BJ (cell line): ENCODE measurements at regions of chr1 and their contacts with region 1.

Region 1: GRCh38 chr1:171809834-171810233 is 28.4 kb downstream of the METTL13 start:
- DNase-seq: no peak
- H3K4me3 ChIP-seq: no peak overlapping the region
- H3K27me3 ChIP-seq: no peaks in the 10 kb centered on the region; the same call in 1 of the 2 replicates
- CTCF ChIP-seq: no peak

Region 2: DNA sequence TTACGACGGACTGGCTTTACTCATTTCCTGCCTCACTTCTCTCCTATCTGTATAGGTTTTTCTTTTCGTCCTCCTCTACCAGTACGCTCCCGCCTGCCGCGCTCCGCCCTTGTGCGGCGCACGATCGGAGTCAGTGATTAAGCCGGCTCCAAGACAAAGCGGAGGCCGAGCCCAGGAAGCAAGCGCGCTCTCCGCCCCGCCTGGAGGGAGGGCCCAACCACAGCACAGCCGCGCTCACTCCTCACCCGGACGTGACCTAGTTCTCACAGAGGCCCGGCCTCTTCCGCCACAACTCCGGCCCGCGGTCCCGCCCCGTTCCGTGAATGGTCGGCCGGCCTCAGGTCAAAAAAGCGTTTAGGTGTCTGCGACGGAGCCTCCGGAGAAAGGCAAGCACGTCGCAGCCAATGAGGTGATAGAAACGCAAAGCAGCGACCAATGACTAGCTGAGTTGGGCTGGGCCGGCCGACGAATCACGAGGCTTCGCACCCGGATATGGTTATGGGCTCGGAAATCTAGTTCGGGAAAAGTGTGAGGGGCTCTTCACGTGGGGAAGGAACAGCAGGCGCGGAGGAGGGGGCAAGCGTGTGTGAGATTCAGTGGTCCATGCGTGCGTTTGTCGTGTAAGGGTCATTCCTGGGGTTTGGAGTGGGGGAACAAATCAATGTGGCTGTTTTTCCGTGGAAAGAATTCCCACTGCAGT is 28.5 kb before region 1 on chr1 and contains the start of gene METTL13:
- CTCF ChIA-PET with region 1: no interaction called
- POLR2A ChIA-PET with region 1: no interaction called
- DNase-seq: peak; percentile 97
- H3K4me3 ChIP-seq: peak within 1 kb of the TSS; percentile 75
- H3K27me3 ChIP-seq: no peaks in the 10 kb centered on the region
- CTCF ChIP-seq: 0 out of 2 replicates have a peak, but pooled peaks have one; percentile 11
- polyA plus RNA-seq, gene METTL13: 25.9 and 30.1 TPM in 2 replicates

Region 3: GRCh38 chr1:171841050-171841940 is 31.5 kb after region 1 on chr1 and contains the start of gene DNM3:
- CTCF ChIA-PET with region 1: no interaction called
- POLR2A ChIA-PET with region 1: interaction called, 12 read pairs
- DNase-seq: no peak
- H3K4me3 ChIP-seq: peak within 1 kb of the TSS; percentile 66
- H3K27me3 ChIP-seq: peaks cover 9% of the 10 kb centered on the region
- CTCF ChIP-seq: no peak
- polyA plus RNA-seq, gene DNM3: 0.26 and 0.31 TPM in 2 replicates